HEK293 (cell line): ENCODE measurements at regions of chr5 and their contacts with region 1.

Region 1: GRCh38 chr5:64147849-64148441 is 17.7 kb upstream of the RNF180 start:
- H3K4me3 ChIP-seq: no peak overlapping the region
- H3K27ac ChIP-seq: no peak overlapping the region
- H3K4me1 ChIP-seq: no peaks in the 10 kb centered on the region
- CTCF ChIP-seq: peak; percentile 64; the same call in 1 of the 2 replicates

Region 2: GRCh38 chr5:64015824-64016223 is 132.1 kb before region 1 on chr5:
- CTCF ChIA-PET with region 1: no interaction called
- POLR2A ChIA-PET with region 1: no interaction called
- H3K4me3 ChIP-seq: no peak overlapping the region
- H3K27ac ChIP-seq: no peak overlapping the region
- H3K4me1 ChIP-seq: no peaks in the 10 kb centered on the region
- CTCF ChIP-seq: no peak

Region 3: DNA sequence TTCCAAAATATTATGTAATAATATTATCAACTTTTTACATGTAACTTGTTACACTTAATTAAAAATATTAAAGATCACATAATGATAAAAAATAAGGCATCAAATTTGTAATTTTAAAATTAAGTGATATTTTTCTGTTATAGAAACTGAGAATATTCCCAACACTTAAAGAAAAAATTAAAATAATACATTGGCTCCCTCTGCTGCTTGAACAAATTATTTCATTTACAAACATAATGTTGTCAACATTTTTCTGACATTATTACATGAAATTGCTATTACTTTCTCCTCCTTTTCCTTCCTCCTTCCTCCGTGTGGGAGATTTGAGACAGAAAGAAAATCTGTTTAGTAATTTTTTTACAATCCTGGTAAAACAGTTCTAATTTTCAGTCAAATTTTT is 60.0 kb after region 1 on chr5:
- CTCF ChIA-PET with region 1: interaction called, 16 read pairs
- POLR2A ChIA-PET with region 1: no interaction called
- H3K4me3 ChIP-seq: no peak overlapping the region
- H3K27ac ChIP-seq: no peak overlapping the region
- H3K4me1 ChIP-seq: no peaks in the 10 kb centered on the region
- CTCF ChIP-seq: no peak

Region 4: GRCh38 chr5:64612344-64612961 is 464.5 kb after region 1 on chr5:
- CTCF ChIA-PET with region 1: interaction called, 42 read pairs
- POLR2A ChIA-PET with region 1: no interaction called
- H3K4me3 ChIP-seq: no peak overlapping the region
- H3K27ac ChIP-seq: no peak overlapping the region
- H3K4me1 ChIP-seq: no peaks in the 10 kb centered on the region
- CTCF ChIP-seq: peak; percentile 56; the same call in 1 of the 2 replicates